Psoas muscle (tissue), 8 donors: ENCODE measurements at regions of chr7 and their contacts with region 1.

Region 1: GRCh38 chr7:7424151-7424873 is 111.4 kb downstream of the COL28A1 start:
- DNase-seq: peak; percentile 37 to 59
- ATAC-seq: peak; percentile 76 to 98 (median 90)
- H3K4me3 ChIP-seq: peak overlapping the region; percentile 49
- H3K27ac ChIP-seq: no peak overlapping the region
- H3K4me1 ChIP-seq: no peaks in the 10 kb centered on the region
- H3K27me3 ChIP-seq: no peaks in the 10 kb centered on the region
- CTCF ChIP-seq: peak; percentile 74

Region 2: GRCh38 chr7:7535691-7536090 is 111.4 kb after region 1 on chr7 and contains the start of gene COL28A1:
- intact Hi-C with region 1: loop called (anchors 2 to 5 kb)
- DNase-seq: no peak
- ATAC-seq: peak in 2 of 4 donors; percentile 15 to 56
- H3K4me3 ChIP-seq: peak within 1 kb of the TSS; percentile 55
- H3K27ac ChIP-seq: peak within 1 kb of the TSS; percentile 51
- H3K4me1 ChIP-seq: peaks cover 5% of the 10 kb centered on the region
- H3K27me3 ChIP-seq: no peaks in the 10 kb centered on the region
- CTCF ChIP-seq: no peak
- total RNA-seq, gene COL28A1: 1.9 to 6.3 (median 3.0) TPM

Region 3: GRCh38 chr7:8295638-8296361 is 871.5 kb after region 1 on chr7:
- intact Hi-C with region 1: loop called (anchors 5 to 10 kb)
- DNase-seq: no peak
- ATAC-seq: peak; percentile 89 to 99 (median 98)
- H3K4me3 ChIP-seq: no peak overlapping the region
- H3K27ac ChIP-seq: no peak overlapping the region
- H3K4me1 ChIP-seq: no peaks in the 10 kb centered on the region
- H3K27me3 ChIP-seq: peaks cover 0 to 2% (median 0%) of the 10 kb centered on the region in 3 donors
- CTCF ChIP-seq: peak; percentile 84